Cardiac septum (tissue), 1 donor: ENCODE measurements at regions of chr20 and their contacts with region 1.

Region 1: DNA sequence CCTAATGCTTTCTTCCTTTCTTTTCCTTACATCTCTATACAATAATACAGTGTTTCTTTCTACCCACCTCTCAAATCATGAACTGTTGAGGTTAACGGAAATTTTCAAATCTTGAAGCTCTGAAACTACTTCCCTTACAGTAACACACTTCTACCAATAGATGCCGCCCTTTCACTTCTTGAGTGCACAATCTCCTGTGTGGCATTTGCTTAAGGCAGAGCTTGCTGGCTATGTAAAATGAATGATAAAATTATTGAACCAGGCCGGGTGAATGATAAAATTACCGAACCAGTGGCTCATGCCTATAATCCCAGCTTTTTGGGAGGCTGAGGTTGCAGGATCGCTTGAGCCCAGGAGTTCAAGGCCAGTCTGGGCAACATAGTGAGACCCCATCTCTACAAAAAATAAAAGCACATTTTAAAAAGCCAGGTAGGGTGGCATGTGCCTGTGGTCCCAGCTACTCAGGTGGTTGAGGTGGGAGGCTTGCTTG is 56.8 kb downstream of the KCNS1 start:
- DNase-seq: no peak

Region 2: DNA sequence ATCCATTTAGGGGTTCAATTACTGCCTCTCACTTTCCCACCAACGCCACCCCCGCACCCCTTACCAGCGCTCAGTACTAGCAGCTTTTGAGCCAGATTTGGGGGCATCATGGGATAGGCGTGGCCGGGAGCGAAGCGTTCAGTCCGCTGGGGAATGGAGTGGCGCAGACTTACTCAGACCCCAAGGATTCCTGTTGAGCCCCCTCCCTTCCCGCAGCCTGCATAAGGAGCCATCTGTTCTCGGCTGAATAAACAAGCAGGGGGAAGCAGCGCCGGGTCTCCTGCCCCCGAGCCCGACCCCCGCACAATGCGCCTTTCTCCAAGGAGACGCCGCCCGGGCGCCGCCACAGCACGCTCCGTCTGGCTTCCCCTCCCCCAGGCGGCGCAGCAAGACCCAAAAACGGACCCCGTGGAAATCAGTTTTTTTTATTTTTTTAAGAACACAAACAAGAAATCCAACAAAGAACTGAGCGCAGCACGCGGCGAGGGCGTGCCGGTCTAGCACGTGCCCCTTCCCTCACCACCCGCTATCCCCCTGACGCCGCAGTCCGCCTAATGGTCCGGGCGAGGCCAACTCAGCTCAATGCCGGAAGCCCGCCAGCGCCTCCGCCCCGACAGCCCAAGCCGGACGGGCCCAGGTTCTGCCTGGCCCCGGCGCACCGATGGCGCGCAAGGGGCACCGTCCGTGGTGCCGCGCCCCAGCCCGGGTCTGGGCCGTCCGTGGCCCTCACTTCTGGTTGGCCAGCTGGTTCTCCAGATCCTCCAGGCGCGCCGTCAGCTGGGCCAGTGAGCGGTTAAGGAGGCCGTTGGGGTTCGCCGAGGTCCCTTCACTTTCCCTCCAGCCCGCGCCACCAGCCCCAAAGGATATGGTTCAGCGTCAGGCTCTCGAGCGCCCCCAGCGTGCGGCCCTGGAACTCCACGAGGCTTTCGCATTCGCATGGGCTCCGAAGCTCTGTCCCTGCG is 249.2 kb after region 1 on chr20:
- intact Hi-C with region 1: loop called (anchors 5 kb)
- DNase-seq: peak; percentile 94